CD4-positive, alpha-beta T cell (primary cell): ENCODE measurements at regions of chr2 and their contacts with region 1.

Region 1: DNA sequence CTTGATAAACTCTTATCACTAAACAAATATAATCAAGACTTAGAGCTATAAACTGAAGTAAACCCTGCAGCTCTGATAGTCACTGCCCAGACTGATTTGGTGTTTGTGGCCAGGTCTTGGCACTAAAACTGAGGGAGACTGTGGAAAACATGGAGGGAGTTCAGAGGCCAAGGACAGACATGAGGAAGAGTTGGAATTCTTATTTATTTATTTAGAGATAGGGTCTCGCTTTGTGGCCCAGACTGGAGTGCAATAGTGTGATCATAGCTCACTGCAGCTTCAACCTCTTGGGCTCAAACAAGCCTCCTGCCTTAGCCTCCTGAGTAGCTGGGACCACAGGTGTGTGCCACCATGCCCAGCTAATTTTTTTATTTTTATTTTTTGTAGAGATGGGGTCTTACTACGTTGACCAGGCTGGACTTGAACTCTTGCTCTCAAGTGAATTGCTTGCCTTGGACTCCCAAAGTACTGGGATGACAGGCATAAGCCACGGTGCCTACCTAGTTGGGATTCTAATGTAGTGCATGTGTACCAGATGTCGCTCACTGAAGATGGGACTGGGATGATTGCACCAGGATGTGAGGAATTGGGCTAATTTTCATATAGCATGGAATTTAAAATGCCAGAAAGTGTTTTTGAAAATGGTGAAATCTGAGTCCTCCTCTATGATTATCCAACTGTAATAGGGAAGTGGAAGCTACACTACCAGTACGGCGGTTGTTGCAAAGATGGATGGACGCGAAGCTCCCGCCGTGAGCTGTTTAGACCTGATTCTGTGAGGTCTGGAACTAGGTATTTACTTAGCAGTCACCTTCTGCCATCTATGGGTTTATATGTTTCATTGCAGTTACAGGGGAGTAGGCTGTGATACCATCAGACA is 52.7 kb upstream of the CTLA4 start:
- DNase-seq: peak; percentile 25 to 85 (median 42)
- ATAC-seq: peak; percentile 89
- H3K4me3 ChIP-seq: peak overlapping the region; percentile 25
- H3K4me3 Mint-ChIP-seq: peak overlapping the region; percentile 85
- H3K27ac ChIP-seq: no peak overlapping the region
- H3K27ac Mint-ChIP-seq: peak overlapping the region; percentile 52
- H3K4me1 ChIP-seq: peaks cover 39% of the 10 kb centered on the region
- H3K4me1 Mint-ChIP-seq: peaks cover 52% of the 10 kb centered on the region
- H3K27me3 ChIP-seq: no peaks in the 10 kb centered on the region
- H3K27me3 Mint-ChIP-seq: no peaks in the 10 kb centered on the region
- CTCF ChIP-seq: peak; percentile 81

Region 2: GRCh38 chr2:202831242-202832220 is 983.4 kb before region 1 on chr2:
- CTCF ChIA-PET with region 1: no interaction called
- POLR2A ChIA-PET with region 1: no interaction called
- intact Hi-C with region 1: loop called in 1 of 2 experiments (anchors 10 kb)
- DNase-seq: peak in 13 of 14 experiments; percentile 6 to 71 (median 18)
- ATAC-seq: peak; percentile 73
- H3K4me3 ChIP-seq: no peak overlapping the region
- H3K4me3 Mint-ChIP-seq: peak overlapping the region; percentile 46
- H3K27ac ChIP-seq: no peak overlapping the region
- H3K27ac Mint-ChIP-seq: no peak overlapping the region
- H3K4me1 ChIP-seq: peaks cover 6% of the 10 kb centered on the region
- H3K4me1 Mint-ChIP-seq: peaks cover 17% of the 10 kb centered on the region
- H3K27me3 ChIP-seq: no peaks in the 10 kb centered on the region
- H3K27me3 Mint-ChIP-seq: no peaks in the 10 kb centered on the region
- CTCF ChIP-seq: peak; percentile 64

Region 3: GRCh38 chr2:203484266-203485112 is 330.4 kb before region 1 on chr2:
- CTCF ChIA-PET with region 1: interaction called, 13 read pairs
- POLR2A ChIA-PET with region 1: interaction called, 13 read pairs
- intact Hi-C with region 1: loop called (anchors 1 kb)
- DNase-seq: peak; percentile 34 to 83 (median 48)
- ATAC-seq: peak; percentile 98
- H3K4me3 ChIP-seq: no peak overlapping the region
- H3K4me3 Mint-ChIP-seq: no peak overlapping the region
- H3K27ac ChIP-seq: no peak overlapping the region
- H3K27ac Mint-ChIP-seq: no peak overlapping the region
- H3K4me1 ChIP-seq: peaks cover 3% of the 10 kb centered on the region
- H3K4me1 Mint-ChIP-seq: peaks cover 6% of the 10 kb centered on the region
- H3K27me3 ChIP-seq: no peaks in the 10 kb centered on the region
- H3K27me3 Mint-ChIP-seq: no peaks in the 10 kb centered on the region
- CTCF ChIP-seq: peak; percentile 77

Region 4: GRCh38 chr2:203740780-203741281 is 74.1 kb before region 1 on chr2:
- CTCF ChIA-PET with region 1: interaction called, 4 read pairs
- POLR2A ChIA-PET with region 1: interaction called, 34 read pairs
- intact Hi-C with region 1: no loop called
- DNase-seq: peak in 7 of 14 experiments; percentile 31 to 89 (median 55)
- ATAC-seq: peak; percentile 86
- H3K4me3 ChIP-seq: peak overlapping the region; percentile 1
- H3K4me3 Mint-ChIP-seq: peak overlapping the region; percentile 70
- H3K27ac ChIP-seq: peak overlapping the region; percentile 66 to 79
- H3K27ac Mint-ChIP-seq: peak overlapping the region; percentile 87
- H3K4me1 ChIP-seq: peaks cover 76% of the 10 kb centered on the region
- H3K4me1 Mint-ChIP-seq: peaks cover 80% of the 10 kb centered on the region
- H3K27me3 ChIP-seq: no peaks in the 10 kb centered on the region
- H3K27me3 Mint-ChIP-seq: no peaks in the 10 kb centered on the region
- CTCF ChIP-seq: no peak

Region 5: GRCh38 chr2:203804070-203804469 is 10.8 kb before region 1 on chr2:
- CTCF ChIA-PET with region 1: interaction called, 12 read pairs
- POLR2A ChIA-PET with region 1: interaction called, 19 read pairs
- intact Hi-C with region 1: no loop called
- DNase-seq: peak in 5 of 14 experiments; percentile 11 to 70 (median 63)
- ATAC-seq: peak; percentile 75
- H3K4me3 ChIP-seq: peak overlapping the region; percentile 3
- H3K4me3 Mint-ChIP-seq: peak overlapping the region; percentile 30
- H3K27ac ChIP-seq: peak overlapping the region in 1 of 2 donors; percentile 46
- H3K27ac Mint-ChIP-seq: peak overlapping the region; percentile 57
- H3K4me1 ChIP-seq: peaks cover 27% of the 10 kb centered on the region
- H3K4me1 Mint-ChIP-seq: peaks cover 72% of the 10 kb centered on the region
- H3K27me3 ChIP-seq: no peaks in the 10 kb centered on the region
- H3K27me3 Mint-ChIP-seq: no peaks in the 10 kb centered on the region
- CTCF ChIP-seq: no peak

Region 6: GRCh38 chr2:203960811-203961210 is 145.9 kb after region 1 on chr2:
- CTCF ChIA-PET with region 1: no interaction called
- POLR2A ChIA-PET with region 1: no interaction called
- intact Hi-C with region 1: no loop called
- DNase-seq: no peak
- ATAC-seq: no peak
- H3K4me3 ChIP-seq: no peak overlapping the region
- H3K4me3 Mint-ChIP-seq: no peak overlapping the region
- H3K27ac ChIP-seq: no peak overlapping the region
- H3K27ac Mint-ChIP-seq: peak overlapping the region; percentile 28
- H3K4me1 ChIP-seq: no peaks in the 10 kb centered on the region
- H3K4me1 Mint-ChIP-seq: peaks cover 39% of the 10 kb centered on the region
- H3K27me3 ChIP-seq: no peaks in the 10 kb centered on the region
- H3K27me3 Mint-ChIP-seq: no peaks in the 10 kb centered on the region
- CTCF ChIP-seq: no peak